ENCODE measurements at regions of chr16 and their contacts with region 1.

Region 1: GRCh38 chr16:73956587-73957494 is 339.8 kb upstream of the PSMD7 start:
- DNase-seq: peak; percentile 77
- H3K4me3 Mint-ChIP-seq: no peak overlapping the region
- H3K27ac Mint-ChIP-seq: no peak overlapping the region
- H3K4me1 Mint-ChIP-seq: no peaks in the 10 kb centered on the region
- H3K27me3 Mint-ChIP-seq: no peaks in the 10 kb centered on the region

Region 2: DNA sequence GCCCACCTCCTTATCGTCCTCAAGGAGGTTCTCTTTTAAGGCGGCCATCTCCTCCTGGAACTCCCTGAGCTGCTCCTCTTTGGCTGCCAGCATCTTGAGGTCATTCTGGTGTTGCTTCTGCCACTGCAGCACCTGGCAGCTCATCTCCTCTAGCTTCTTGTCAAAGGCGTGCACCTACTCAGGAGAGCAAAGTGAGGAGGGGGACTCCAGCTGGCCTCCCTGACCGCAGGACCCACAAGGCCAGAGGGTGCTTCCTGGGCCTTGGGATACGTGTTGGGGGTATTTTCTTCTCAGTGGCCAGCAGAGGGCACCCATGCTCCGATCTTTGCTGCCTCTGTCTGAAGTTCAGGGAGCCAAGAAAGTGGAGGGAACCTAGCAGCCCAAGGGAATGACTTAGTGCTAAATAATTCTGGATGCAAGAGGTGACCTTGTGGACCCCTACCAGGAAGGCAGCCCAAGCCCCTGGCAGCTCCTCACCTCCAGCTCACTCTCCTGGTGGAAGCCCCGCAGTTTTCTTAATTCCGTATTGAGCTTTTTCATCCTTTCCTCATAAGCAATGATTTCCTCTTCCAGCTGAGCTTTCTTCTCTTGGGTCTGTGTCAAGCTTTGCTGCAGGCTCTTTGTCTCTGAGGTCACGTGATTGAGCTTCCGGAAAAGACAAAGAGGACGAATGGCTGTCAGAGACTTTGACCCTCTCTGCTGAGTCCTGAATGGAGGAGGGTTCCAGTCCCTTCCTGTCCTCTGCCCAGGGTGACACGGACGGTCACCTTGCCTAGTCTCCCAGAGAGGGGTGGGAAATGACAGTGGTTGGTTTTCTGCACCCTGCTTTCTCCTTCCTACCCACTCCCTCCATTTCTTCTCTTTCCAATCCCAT is 1831.8 kb before region 1 on chr16:
- intact Hi-C with region 1: loop called (anchors 5 kb)
- DNase-seq: peak; percentile 86
- H3K4me3 Mint-ChIP-seq: no peak overlapping the region
- H3K27ac Mint-ChIP-seq: no peak overlapping the region
- H3K4me1 Mint-ChIP-seq: no peaks in the 10 kb centered on the region
- H3K27me3 Mint-ChIP-seq: peaks cover 6% of the 10 kb centered on the region

Region 3: DNA sequence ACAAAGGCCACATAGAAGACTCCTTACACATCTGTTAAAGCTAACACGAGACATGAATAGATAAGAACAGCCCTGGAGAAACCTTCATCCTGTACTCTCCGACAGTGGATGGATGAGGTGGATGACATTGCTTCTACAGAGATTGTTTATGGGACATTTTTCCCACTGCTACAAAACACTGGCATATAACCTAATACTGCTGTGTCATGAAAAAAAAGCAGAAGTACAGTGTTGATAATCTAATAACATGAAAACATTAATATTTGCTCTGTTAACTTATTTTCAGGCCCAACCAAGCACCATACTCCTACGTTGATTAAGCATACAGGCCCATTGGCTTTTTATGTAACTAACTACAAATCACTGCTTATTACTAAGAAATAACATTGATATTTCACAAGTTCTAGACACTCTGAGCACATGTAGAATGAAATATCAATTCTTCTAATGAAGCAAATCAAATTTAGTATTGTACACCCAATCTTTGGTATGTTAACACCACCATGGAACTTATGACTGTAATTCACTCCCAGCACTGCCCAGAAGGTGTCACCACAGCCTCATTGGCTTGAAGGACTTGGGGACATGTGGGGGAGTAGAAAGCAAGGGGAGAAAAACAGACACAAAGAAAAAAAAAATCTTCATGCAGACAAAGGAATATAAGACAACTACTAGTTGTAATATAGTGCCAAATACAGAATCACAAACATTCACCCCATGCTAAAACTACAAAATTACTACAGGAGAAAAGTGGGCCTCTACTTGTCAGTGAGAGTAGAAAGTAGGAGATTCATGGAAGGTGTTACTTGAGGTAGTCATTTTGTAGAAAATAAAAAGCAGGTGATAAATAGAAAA is 1454.9 kb before region 1 on chr16:
- intact Hi-C with region 1: loop called (anchors 10 kb)
- DNase-seq: peak; percentile 77
- H3K4me3 Mint-ChIP-seq: no peak overlapping the region
- H3K27ac Mint-ChIP-seq: no peak overlapping the region
- H3K4me1 Mint-ChIP-seq: no peaks in the 10 kb centered on the region
- H3K27me3 Mint-ChIP-seq: no peaks in the 10 kb centered on the region

Region 4: GRCh38 chr16:73966851-73967250 is 10.0 kb after region 1 on chr16:
- intact Hi-C with region 1: no loop called
- DNase-seq: no peak
- H3K4me3 Mint-ChIP-seq: no peak overlapping the region
- H3K27ac Mint-ChIP-seq: no peak overlapping the region
- H3K4me1 Mint-ChIP-seq: no peaks in the 10 kb centered on the region
- H3K27me3 Mint-ChIP-seq: no peaks in the 10 kb centered on the region

Measured in activated CD4-positive, alpha-beta T cell treated with anti-CD3 and anti-CD28 coated beads, Interleukin-2, amount 10 ng/mL, durations not matched to agents 24 days and 14 days (primary cell).